H1 (cell line): ENCODE measurements at regions of chr9 and their contacts with region 1.

Region 1: DNA sequence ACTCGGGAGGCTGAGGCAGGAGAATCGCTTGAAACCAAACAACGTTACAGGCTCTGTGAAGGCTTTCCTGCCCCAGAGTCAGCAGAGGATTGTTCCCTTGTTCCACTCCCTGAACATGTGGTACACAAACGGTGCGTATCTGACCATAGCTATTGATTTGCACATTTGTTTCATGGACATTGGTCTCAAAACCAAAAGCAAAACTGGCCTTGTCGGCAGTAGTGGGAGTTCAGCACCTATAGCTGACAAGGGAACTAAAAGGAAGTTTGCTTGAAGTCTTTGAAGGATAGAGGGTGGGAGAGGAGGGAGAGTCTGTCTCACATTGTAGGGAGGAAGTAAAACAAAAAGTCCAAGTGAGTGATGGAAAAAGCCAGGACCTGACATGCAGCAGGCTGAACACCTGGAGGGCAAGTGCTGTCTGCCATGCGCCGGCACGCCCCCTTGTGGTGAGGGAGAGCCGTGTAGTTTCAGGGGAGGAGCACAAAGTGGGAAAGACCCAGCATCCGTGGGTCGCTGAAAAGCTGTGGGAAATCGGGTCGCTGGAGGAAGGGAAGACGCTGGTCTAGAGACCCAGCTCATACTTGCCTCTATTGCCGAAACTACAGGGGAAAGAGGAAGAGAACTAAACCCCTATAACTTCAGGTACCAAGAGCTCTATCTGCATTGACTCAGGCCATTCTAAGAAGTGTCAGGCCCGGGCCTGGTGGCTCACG is 58.0 kb downstream of the RAD23B start:
- DNase-seq: peak; percentile 58 to 96
- H3K4me3 ChIP-seq: no peak overlapping the region
- H3K27ac ChIP-seq: no peak overlapping the region; the same call in 1 of the 2 replicates
- H3K4me1 ChIP-seq: peaks cover 0 to 2% (median 0%) of the 10 kb centered on the region in 4 experiments; a peak in 2 of 7 replicates
- H3K27me3 ChIP-seq: no peaks in the 10 kb centered on the region
- CTCF ChIP-seq: peak; percentile 84 to 98 (median 97)
- EP300 ChIP-seq: no peak
- POLR2A ChIP-seq: no peak; a peak in 1 of 3 replicates
- RAD21 ChIP-seq: peak; percentile 68 to 72

Region 2: GRCh38 chr9:107282753-107283625 is 58.1 kb before region 1 on chr9 and contains the start of gene RAD23B:
- CTCF ChIA-PET with region 1: interaction called, 11 read pairs
- POLR2A ChIA-PET with region 1: interaction called, 10 read pairs
- DNase-seq: peak; percentile 95 to 97
- H3K4me3 ChIP-seq: peak within 1 kb of the TSS; percentile 75 to 87 (median 82)
- H3K27ac ChIP-seq: peak within 1 kb of the TSS; percentile 97
- H3K4me1 ChIP-seq: peaks cover 0 to 7% (median 1%) of the 10 kb centered on the region in 4 experiments; a peak in 3 of 7 replicates
- H3K27me3 ChIP-seq: no peaks in the 10 kb centered on the region
- CTCF ChIP-seq: no peak
- EP300 ChIP-seq: no peak
- POLR2A ChIP-seq: peak; percentile 46 to 80
- RAD21 ChIP-seq: no peak
- total RNA-seq, gene RAD23B: 162 and 165 TPM in 2 replicates

Region 3: GRCh38 chr9:107292821-107293542 is 48.1 kb before region 1 on chr9:
- CTCF ChIA-PET with region 1: interaction called, 10 read pairs
- POLR2A ChIA-PET with region 1: interaction called, 3 read pairs
- DNase-seq: no peak
- H3K4me3 ChIP-seq: no peak overlapping the region
- H3K27ac ChIP-seq: no peak overlapping the region
- H3K4me1 ChIP-seq: peaks cover 0 to 14% (median 5%) of the 10 kb centered on the region in 4 experiments; a peak in 4 of 7 replicates
- H3K27me3 ChIP-seq: no peaks in the 10 kb centered on the region
- CTCF ChIP-seq: no peak
- EP300 ChIP-seq: no peak
- POLR2A ChIP-seq: no peak
- RAD21 ChIP-seq: no peak

Region 4: GRCh38 chr9:107309271-107309670 is 31.8 kb before region 1 on chr9:
- CTCF ChIA-PET with region 1: interaction called, 17 read pairs
- POLR2A ChIA-PET with region 1: interaction called, 4 read pairs
- DNase-seq: no peak
- H3K4me3 ChIP-seq: no peak overlapping the region
- H3K27ac ChIP-seq: no peak overlapping the region
- H3K4me1 ChIP-seq: no peaks in the 10 kb centered on the region
- H3K27me3 ChIP-seq: no peaks in the 10 kb centered on the region
- CTCF ChIP-seq: no peak
- EP300 ChIP-seq: no peak
- POLR2A ChIP-seq: no peak
- RAD21 ChIP-seq: no peak

Region 5: GRCh38 chr9:107323836-107324585 is 17.1 kb before region 1 on chr9:
- CTCF ChIA-PET with region 1: interaction called, 11 read pairs
- POLR2A ChIA-PET with region 1: interaction called, 4 read pairs
- DNase-seq: no peak
- H3K4me3 ChIP-seq: no peak overlapping the region
- H3K27ac ChIP-seq: no peak overlapping the region
- H3K4me1 ChIP-seq: no peaks in the 10 kb centered on the region
- H3K27me3 ChIP-seq: no peaks in the 10 kb centered on the region
- CTCF ChIP-seq: no peak
- EP300 ChIP-seq: no peak
- POLR2A ChIP-seq: no peak
- RAD21 ChIP-seq: no peak

Region 6: GRCh38 chr9:107351382-107352045 is 10.4 kb after region 1 on chr9:
- CTCF ChIA-PET with region 1: interaction called, 14 read pairs
- POLR2A ChIA-PET with region 1: interaction called, 4 read pairs
- DNase-seq: no peak
- H3K4me3 ChIP-seq: no peak overlapping the region
- H3K27ac ChIP-seq: no peak overlapping the region
- H3K4me1 ChIP-seq: peaks cover 0 to 5% (median 0%) of the 10 kb centered on the region in 4 experiments; a peak in 2 of 7 replicates
- H3K27me3 ChIP-seq: 0 out of 7 replicates have a peak, but pooled peaks cover 0 to 2% (median 0%) of the 10 kb centered on the region in 4 experiments
- CTCF ChIP-seq: no peak
- EP300 ChIP-seq: no peak
- POLR2A ChIP-seq: no peak
- RAD21 ChIP-seq: no peak